CD14-positive monocyte (primary cell): ENCODE measurements at regions of chr17 and their contacts with region 1.

Region 1: DNA sequence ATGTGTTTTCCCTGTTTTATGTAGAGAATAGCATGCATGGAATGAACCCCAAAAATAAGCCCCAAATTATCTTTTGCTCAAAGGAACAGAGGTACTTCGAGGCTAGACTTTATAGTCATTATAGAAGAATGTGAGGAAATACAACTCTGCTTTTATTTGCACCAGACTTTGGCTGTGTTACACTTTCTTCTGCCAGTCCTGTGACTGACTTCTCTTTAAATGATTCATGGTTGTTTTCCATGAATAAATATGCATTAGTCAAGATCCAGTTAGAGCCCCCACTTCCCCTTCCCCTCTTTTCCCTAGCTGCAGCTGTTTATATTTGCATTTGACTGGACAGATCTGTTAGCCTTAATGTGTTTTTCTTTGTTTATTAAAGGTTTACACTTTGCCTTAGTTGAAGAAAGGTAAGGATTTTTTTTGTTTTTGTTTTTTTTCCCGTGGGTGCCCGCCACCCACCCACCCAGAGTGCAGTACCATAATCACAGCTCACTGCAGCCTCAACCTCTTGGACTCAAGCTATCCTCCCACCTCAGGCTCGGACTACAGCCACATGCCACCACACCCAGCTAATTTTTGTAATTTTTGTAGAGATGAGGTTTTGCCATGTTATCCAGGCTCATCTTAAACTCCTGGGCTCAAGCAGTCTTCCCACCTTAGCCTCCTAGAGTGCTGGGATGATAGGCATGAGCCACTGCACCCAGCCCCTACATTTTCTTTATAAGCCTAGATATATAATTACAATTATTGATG is 152.6 kb downstream of the CYB561 start:
- DNase-seq: peak in 1 of 3 donors; percentile 17
- H3K4me3 ChIP-seq: no peak overlapping the region
- H3K4me3 Mint-ChIP-seq: no peak overlapping the region
- H3K27ac ChIP-seq: no peak overlapping the region
- H3K27ac Mint-ChIP-seq: no peak overlapping the region
- H3K4me1 ChIP-seq: no peaks in the 10 kb centered on the region
- H3K4me1 Mint-ChIP-seq: no peaks in the 10 kb centered on the region
- H3K27me3 ChIP-seq: no peaks in the 10 kb centered on the region
- H3K27me3 Mint-ChIP-seq: no peaks in the 10 kb centered on the region
- CTCF ChIP-seq: no peak

Region 2: GRCh38 chr17:63341276-63341675 is 47.8 kb after region 1 on chr17:
- intact Hi-C with region 1: loop called in 1 of 2 experiments (anchors 5 kb)
- DNase-seq: peak in 1 of 3 donors; percentile 7
- H3K4me3 ChIP-seq: no peak overlapping the region
- H3K4me3 Mint-ChIP-seq: no peak overlapping the region
- H3K27ac ChIP-seq: no peak overlapping the region
- H3K27ac Mint-ChIP-seq: no peak overlapping the region
- H3K4me1 ChIP-seq: no peaks in the 10 kb centered on the region
- H3K4me1 Mint-ChIP-seq: no peaks in the 10 kb centered on the region
- H3K27me3 ChIP-seq: no peaks in the 10 kb centered on the region
- H3K27me3 Mint-ChIP-seq: peaks cover 0 to 2% (median 0%) of the 10 kb centered on the region in 3 donors
- CTCF ChIP-seq: no peak